HEK293 (cell line): ENCODE measurements at regions of chr1 and their contacts with region 1.

Region 1: GRCh38 chr1:63691701-63692425 is 82.0 kb upstream of the ROR1 start:
- H3K4me3 ChIP-seq: no peak overlapping the region
- H3K27ac ChIP-seq: no peak overlapping the region
- H3K4me1 ChIP-seq: no peaks in the 10 kb centered on the region
- CTCF ChIP-seq: peak; percentile 46

Region 2: GRCh38 chr1:63622849-63623566 is 68.9 kb before region 1 on chr1:
- CTCF ChIA-PET with region 1: interaction called, 11 read pairs
- POLR2A ChIA-PET with region 1: no interaction called
- H3K4me3 ChIP-seq: no peak overlapping the region
- H3K27ac ChIP-seq: no peak overlapping the region
- H3K4me1 ChIP-seq: no peaks in the 10 kb centered on the region
- CTCF ChIP-seq: no peak

Region 3: DNA sequence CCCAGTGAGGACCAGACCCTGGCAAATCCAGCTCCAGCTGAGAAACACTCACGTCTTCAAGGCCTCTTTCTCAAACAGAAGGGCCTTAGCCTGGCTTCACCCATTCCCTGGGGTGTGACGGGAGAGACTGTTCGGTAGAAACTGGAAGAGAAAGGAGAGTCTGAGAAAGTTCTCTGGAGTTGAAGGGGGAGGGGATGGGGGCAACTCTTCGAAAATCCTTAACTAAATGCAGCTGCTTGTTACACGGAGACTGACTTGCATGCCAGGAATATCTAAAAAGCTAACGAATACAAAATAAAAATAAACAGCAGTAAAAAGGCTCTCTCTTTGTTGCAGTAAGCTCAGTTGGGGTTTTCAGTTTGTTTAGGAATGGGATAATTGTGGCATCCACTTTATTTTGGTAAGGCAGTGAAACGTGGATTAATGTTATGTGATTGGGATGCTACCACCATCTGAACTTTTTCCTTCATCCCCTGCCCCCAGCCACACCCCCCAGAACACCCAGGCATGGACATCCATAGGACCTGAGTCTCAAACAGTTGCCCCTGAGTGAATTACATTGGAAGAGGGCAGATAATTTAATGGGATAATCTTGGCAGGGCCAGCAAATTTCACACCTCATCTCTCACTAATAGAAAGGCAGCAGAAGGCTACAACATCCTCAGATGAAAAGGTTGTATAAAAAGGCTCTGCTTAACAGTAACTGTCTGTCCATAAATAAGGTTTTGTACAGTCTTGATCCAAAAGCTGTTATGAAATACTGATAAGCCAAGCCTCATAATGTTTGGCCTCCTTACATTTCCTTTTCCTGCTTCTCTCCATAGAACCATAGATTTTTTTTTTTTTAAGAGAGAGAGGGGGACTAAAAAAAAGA is 87.7 kb after region 1 on chr1:
- CTCF ChIA-PET with region 1: interaction called, 15 read pairs
- POLR2A ChIA-PET with region 1: no interaction called
- H3K4me3 ChIP-seq: no peak overlapping the region
- H3K27ac ChIP-seq: no peak overlapping the region; the same call in 1 of the 2 replicates
- H3K4me1 ChIP-seq: peaks cover 32% of the 10 kb centered on the region
- CTCF ChIP-seq: no peak

Region 4: GRCh38 chr1:63929106-63929478 is 237.2 kb after region 1 on chr1:
- CTCF ChIA-PET with region 1: interaction called, 10 read pairs
- POLR2A ChIA-PET with region 1: no interaction called
- H3K4me3 ChIP-seq: no peak overlapping the region
- H3K27ac ChIP-seq: no peak overlapping the region
- H3K4me1 ChIP-seq: no peaks in the 10 kb centered on the region
- CTCF ChIP-seq: no peak

Region 5: DNA sequence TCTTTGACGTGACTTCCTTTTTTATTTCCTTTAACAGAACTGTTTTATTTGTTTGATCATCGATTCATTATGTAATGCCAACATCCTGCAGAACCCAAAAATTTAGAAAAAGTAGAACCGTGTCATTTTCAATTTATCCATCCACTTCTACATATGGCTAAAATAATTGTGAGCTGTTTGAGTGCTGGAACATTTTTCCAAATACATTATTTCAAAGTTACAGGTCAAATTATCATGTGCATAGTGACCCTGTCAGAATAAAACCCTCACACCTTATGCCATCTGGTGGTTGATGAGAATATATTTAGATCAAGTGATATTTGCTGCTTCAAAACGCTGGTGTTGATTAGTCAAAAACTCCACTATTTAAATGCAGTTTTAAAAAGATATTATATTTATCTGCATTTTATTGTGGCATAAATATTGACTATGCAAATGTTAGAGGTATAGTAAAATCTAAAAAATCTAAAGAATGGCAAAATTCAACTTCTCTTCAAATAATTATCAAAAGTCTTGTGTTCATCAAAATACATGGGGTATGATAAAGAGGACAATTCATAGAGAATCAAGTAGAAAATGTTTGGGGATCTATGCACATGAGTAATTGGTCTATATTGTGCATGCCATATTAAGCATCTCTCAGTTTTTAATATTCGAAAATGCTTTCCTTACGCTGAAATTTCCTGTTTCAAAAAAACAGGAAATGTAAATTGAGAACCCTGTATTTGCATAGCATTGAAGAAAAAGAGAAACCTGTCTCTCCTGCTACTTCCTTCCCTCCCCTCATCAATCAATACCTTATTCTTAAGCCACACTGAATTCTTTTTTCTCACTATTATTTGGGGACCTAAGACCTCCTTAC is 551.3 kb after region 1 on chr1:
- CTCF ChIA-PET with region 1: interaction called, 22 read pairs
- POLR2A ChIA-PET with region 1: no interaction called
- H3K4me3 ChIP-seq: no peak overlapping the region
- H3K27ac ChIP-seq: no peak overlapping the region
- H3K4me1 ChIP-seq: peaks cover 10% of the 10 kb centered on the region
- CTCF ChIP-seq: no peak